Activated T-helper 2 cell treated with anti-CD3 and anti-CD28 coated beads, Interferon-gamma antibody, Interleukin-2, Interleukin-4, amounts not matched to agents 10 μg/mL and 5 μg/mL and 100 μg/mL, durations not matched to agents 14 hours and 24 hours and 36 hours (primary cell): ENCODE measurements at regions of chr10 and their contacts with region 1.

Region 1: GRCh38 chr10:110871298-110872084 is at the start of gene PDCD4:
- DNase-seq: peak; percentile 94
- H3K4me3 Mint-ChIP-seq: peak within 1 kb of the TSS; percentile 91
- H3K27ac Mint-ChIP-seq: peak within 1 kb of the TSS; percentile 97
- H3K4me1 Mint-ChIP-seq: peaks cover 46% of the 10 kb centered on the region
- H3K27me3 Mint-ChIP-seq: no peaks in the 10 kb centered on the region
- total RNA-seq, gene PDCD4: 60.4 and 67.7 TPM in 2 replicates

Region 2: DNA sequence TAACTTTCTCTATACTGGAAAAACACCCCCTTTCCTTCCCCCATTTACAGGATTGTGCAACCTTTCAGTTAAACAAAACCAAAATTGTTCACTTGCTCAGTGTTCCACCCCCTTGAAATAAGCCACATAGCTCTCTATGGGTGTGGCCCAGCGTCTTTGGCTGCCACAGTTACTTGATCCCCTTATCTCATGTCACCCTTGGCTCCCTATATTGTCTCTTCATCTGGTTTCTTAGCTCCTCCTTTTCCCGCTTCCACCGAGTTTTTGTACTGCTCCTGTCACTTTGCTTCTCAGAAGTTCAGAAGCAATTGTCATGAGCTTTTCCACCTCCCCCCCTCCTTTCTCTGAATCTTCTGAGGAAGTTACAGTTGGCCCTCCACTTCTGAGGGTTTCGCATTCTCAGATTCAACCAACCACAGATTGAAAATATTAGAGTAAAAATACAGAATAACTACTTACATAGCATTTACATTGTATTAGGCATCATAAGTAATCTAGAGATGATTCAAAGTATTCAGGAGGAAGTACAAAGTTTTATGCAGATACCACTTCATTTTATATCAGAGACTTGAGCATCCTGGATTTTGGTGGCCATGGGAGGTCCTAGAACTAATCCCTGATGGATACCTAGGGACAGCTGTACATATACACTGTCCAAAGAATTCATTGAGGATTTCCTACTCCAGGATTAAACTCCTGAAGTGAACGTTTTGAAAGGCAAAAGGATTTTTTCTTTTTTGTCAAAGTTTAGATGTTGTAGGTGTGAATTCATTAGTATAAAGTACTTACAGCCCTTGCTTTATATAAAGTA is 803.3 kb before region 1 on chr10:
- intact Hi-C with region 1: loop called (anchors 5 kb)
- DNase-seq: peak; percentile 70
- H3K4me3 Mint-ChIP-seq: peak overlapping the region; percentile 76
- H3K27ac Mint-ChIP-seq: peak overlapping the region; percentile 95
- H3K4me1 Mint-ChIP-seq: peaks cover 69% of the 10 kb centered on the region
- H3K27me3 Mint-ChIP-seq: no peaks in the 10 kb centered on the region

Region 3: DNA sequence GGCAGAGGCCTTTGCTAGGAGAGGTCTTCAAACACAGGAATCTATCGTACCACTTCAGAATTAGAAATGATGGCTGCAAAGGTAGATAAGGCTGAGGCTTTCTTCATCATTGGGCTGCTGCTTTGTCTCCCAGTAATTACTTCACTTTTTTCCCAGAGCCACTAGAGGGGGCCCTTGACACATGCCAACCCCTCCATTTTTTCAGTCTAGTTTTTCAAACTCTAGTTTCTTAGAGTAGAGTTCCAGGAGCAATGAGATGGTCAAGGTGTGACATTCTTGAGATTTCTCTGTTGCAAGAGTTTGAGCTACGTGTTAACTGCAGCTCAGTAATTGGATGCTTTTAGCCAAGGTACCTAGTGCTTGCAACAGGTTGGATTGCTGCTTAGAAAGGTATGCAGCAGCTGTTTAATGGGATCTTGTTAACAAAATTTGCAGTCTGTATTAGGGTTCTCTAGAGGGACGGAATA is 261.1 kb before region 1 on chr10:
- intact Hi-C with region 1: loop called (anchors 10 kb)
- DNase-seq: peak; percentile 28
- H3K4me3 Mint-ChIP-seq: no peak overlapping the region
- H3K27ac Mint-ChIP-seq: no peak overlapping the region
- H3K4me1 Mint-ChIP-seq: peaks cover 26% of the 10 kb centered on the region
- H3K27me3 Mint-ChIP-seq: no peaks in the 10 kb centered on the region

Region 4: GRCh38 chr10:110774069-110775019 is 97.1 kb before region 1 on chr10:
- intact Hi-C with region 1: loop called (anchors 1 kb)
- DNase-seq: peak; percentile 59
- H3K4me3 Mint-ChIP-seq: peak overlapping the region; percentile 54
- H3K27ac Mint-ChIP-seq: peak overlapping the region; percentile 99
- H3K4me1 Mint-ChIP-seq: peaks cover 59% of the 10 kb centered on the region
- H3K27me3 Mint-ChIP-seq: peaks cover 1% of the 10 kb centered on the region

Region 5: GRCh38 chr10:110834629-110835301 is 36.7 kb before region 1 on chr10:
- intact Hi-C with region 1: no loop called
- DNase-seq: no peak
- H3K4me3 Mint-ChIP-seq: no peak overlapping the region
- H3K27ac Mint-ChIP-seq: peak overlapping the region; percentile 57
- H3K4me1 Mint-ChIP-seq: peaks cover 9% of the 10 kb centered on the region
- H3K27me3 Mint-ChIP-seq: no peaks in the 10 kb centered on the region

Region 6: DNA sequence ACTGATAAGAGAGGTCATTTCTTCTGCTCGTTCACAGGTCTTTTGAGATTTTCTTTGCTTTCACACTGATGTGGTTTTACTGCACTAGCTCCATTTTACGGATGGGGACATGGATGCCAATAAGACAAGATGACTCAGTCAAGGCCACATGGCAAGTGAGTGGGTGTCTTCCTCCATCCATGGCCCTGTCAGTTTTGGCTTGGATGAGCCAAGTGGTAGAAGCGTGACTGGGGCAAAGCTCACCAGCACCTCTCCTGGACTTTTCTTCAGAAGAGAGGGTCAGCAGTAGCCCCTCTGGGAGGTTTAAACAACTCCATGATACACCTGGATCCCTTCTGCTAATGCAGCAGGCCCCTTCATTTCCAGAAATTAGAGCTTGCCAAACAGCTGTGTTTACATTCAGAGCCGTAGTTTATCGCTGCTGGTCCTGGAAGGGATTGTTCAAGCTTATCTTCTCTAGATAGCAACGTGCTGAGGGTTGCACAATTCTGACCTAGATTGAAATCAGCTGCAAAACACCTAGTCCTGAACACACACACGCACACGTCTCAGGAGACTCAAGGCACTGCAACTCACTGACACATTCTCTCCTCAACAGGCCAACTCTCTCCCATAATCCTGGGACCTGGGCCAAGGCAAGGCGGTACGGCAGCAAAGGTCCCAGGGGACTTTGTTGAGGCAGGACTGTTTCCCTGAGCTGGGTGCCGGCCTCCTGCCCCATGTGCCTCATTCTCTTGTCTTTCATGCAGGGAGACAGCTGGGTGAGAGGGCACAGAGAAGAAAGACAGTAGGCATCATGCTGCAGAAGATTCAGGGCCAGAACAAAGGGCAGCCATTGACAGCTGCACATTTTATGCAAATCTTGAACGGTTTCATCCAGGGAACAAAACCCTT is 14.0 kb before region 1 on chr10:
- intact Hi-C with region 1: loop called (anchors 2 kb)
- DNase-seq: peak; percentile 28
- H3K4me3 Mint-ChIP-seq: no peak overlapping the region
- H3K27ac Mint-ChIP-seq: peak overlapping the region; percentile 73
- H3K4me1 Mint-ChIP-seq: peaks cover 55% of the 10 kb centered on the region
- H3K27me3 Mint-ChIP-seq: no peaks in the 10 kb centered on the region